T-cell (primary cell): ENCODE measurements at regions of chr5 and their contacts with region 1.

Region 1: GRCh38 chr5:69113851-69114250 is 20.0 kb downstream of the SLC30A5 start:
- DNase-seq: no peak
- ATAC-seq: no peak
- H3K4me3 ChIP-seq: no peak overlapping the region
- H3K4me3 Mint-ChIP-seq: no peak overlapping the region
- H3K27ac ChIP-seq: no peak overlapping the region
- H3K27ac Mint-ChIP-seq: no peak overlapping the region
- H3K4me1 ChIP-seq: no peaks in the 10 kb centered on the region
- H3K4me1 Mint-ChIP-seq: no peaks in the 10 kb centered on the region
- H3K27me3 ChIP-seq: no peaks in the 10 kb centered on the region
- H3K27me3 Mint-ChIP-seq: no peaks in the 10 kb centered on the region

Region 2: GRCh38 chr5:68950125-68950524 is 163.7 kb before region 1 on chr5:
- CTCF ChIA-PET with region 1: no interaction called
- POLR2A ChIA-PET with region 1: no interaction called
- DNase-seq: no peak
- ATAC-seq: no peak
- H3K4me3 ChIP-seq: no peak overlapping the region
- H3K4me3 Mint-ChIP-seq: no peak overlapping the region
- H3K27ac ChIP-seq: no peak overlapping the region
- H3K27ac Mint-ChIP-seq: no peak overlapping the region
- H3K4me1 ChIP-seq: no peaks in the 10 kb centered on the region
- H3K4me1 Mint-ChIP-seq: no peaks in the 10 kb centered on the region
- H3K27me3 ChIP-seq: peaks cover 0 to 2% of the 10 kb centered on the region in 2 experiments
- H3K27me3 Mint-ChIP-seq: peaks cover 3 to 6% of the 10 kb centered on the region in 2 donors

Region 3: DNA sequence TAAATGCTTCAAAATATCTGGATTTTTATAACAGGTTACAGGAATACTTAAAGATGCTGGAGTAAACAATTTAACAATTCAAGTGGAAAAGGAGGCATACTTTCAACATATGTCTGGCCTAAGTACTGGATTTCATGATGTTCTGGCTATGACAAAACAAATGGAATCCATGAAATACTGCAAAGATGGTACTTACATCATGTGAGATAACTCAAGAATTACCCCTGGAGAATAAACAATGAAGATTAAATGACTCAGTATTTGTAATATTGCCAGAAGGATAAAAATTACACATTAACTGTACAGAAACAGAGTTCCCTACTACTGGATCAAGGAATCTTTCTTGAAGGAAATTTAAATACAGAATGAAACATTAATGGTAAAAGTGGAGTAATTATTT is 15.6 kb after region 1 on chr5:
- CTCF ChIA-PET with region 1: no interaction called
- POLR2A ChIA-PET with region 1: no interaction called
- DNase-seq: no peak
- ATAC-seq: no peak
- H3K4me3 ChIP-seq: no peak overlapping the region
- H3K4me3 Mint-ChIP-seq: no peak overlapping the region
- H3K27ac ChIP-seq: no peak overlapping the region
- H3K27ac Mint-ChIP-seq: no peak overlapping the region
- H3K4me1 ChIP-seq: no peaks in the 10 kb centered on the region
- H3K4me1 Mint-ChIP-seq: no peaks in the 10 kb centered on the region
- H3K27me3 ChIP-seq: no peaks in the 10 kb centered on the region
- H3K27me3 Mint-ChIP-seq: no peaks in the 10 kb centered on the region

Region 4: DNA sequence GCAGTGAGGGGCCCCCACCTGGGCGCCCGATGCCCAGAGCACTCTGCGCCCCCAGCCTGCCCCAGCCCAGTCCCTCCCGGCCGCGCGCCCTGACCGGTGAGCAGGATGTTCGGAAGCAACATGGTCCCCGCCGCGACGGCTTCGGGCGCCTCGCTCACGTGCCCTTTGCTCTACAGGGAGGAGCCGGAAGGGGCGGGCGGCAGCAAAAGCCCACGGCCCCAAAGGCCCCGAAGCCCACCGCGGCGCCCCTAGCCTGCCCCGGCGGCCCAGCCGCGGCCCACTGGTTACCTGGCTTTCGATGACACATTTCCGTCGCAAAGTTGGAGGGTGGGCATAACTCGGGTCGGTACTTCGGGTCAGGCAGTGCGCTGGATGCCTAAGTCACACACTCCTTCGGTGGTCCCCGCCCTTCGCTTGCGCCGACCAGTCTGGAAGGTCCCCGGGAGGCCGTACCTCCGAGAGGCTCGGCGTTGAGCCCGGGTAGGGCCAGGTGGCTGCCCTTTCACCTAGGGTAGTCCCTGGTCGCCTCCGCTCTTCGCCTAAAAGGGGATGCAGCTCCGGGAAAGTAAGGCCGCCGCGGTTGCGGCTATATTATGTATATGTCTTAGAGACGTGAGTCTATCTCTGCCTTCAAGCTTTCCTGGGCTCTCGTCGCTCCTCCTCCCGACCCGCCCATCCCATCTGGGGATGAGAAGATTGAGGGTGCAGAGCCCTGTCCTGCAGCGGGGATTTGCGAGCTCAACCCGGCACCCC is 255.7 kb after region 1 on chr5 and contains the starts of genes AK6, RAD17 and TAF9:
- CTCF ChIA-PET with region 1: interaction called in 1 of 2 experiments, 15 read pairs
- POLR2A ChIA-PET with region 1: no interaction called
- DNase-seq: peak; percentile 81 to 95 (median 89)
- ATAC-seq: peak; percentile 88 to 95 (median 91)
- H3K4me3 ChIP-seq: peak within 1 kb of the TSS; percentile 88 to 90
- H3K4me3 Mint-ChIP-seq: peak within 1 kb of the TSS; percentile 89 to 94 (median 91)
- H3K27ac ChIP-seq: peak within 1 kb of the TSS; percentile 92
- H3K27ac Mint-ChIP-seq: peak within 1 kb of the TSS; percentile 98 to 99
- H3K4me1 ChIP-seq: peaks cover 15 to 23% of the 10 kb centered on the region in 2 experiments
- H3K4me1 Mint-ChIP-seq: peaks cover 37 to 59% (median 54%) of the 10 kb centered on the region in 3 donors
- H3K27me3 ChIP-seq: no peaks in the 10 kb centered on the region
- H3K27me3 Mint-ChIP-seq: no peaks in the 10 kb centered on the region
- total RNA-seq, gene AK6: 9.5 to 23.8 (median 19.1) TPM
- total RNA-seq, gene RAD17: 23.1 to 30.7 (median 29.7) TPM
- total RNA-seq, gene TAF9: 42.5 to 54.3 (median 50.0) TPM